ENCODE measurements at regions of chr17 and their contacts with region 1.

Region 1: GRCh38 chr17:40026816-40027613 is 11.8 kb downstream of the CSF3 start:
- DNase-seq: peak; percentile 74
- H3K4me3 ChIP-seq: no peak overlapping the region
- H3K27ac ChIP-seq: peak overlapping the region; percentile 99
- H3K4me1 ChIP-seq: peaks cover 48% of the 10 kb centered on the region
- H3K27me3 ChIP-seq: no peaks in the 10 kb centered on the region
- CTCF ChIP-seq: peak; percentile 81 to 93
- POLR2A ChIP-seq: no peak

Region 2: DNA sequence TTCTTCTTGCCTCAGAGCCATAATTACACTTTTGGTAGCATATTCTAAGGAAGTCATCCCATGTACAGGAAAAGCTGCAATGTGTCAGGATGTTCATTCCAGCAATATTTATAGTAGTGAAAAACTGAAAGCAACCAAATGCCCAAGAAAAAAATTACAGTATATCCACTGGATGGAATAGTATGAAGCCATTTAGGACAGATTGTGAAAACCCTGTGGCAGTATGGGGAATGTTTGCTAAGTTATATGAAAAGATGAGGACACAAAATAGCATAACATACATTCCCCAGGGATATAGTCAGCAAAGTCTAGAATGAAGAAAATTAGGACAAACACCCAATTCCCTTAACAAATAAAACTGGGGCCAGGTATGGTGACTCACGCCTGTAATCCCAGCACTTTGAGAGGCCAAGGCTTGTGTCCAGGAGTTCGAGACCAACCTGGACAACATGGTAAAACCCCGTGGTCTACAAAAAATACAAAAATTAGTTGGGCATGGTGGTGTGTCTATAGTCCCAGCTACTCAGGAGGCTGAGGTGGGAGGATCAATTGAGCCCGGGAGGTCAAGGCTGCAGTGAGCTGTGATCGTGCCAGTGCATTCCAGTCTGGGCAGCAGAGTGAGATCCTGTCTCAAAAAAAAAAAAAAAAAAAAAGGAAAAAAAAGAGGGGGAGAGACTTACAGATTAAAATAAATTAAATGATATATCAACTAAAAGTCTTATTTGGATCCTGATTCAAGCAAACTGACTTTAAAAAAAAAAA is 97.2 kb before region 1 on chr17:
- CTCF ChIA-PET with region 1: no interaction called
- POLR2A ChIA-PET with region 1: no interaction called
- dilution Hi-C with region 1: no loop called
- intact Hi-C with region 1: no loop called
- DNase-seq: no peak
- H3K4me3 ChIP-seq: peak overlapping the region in 1 of 3 experiments; percentile 34
- H3K27ac ChIP-seq: peak overlapping the region; percentile 100
- H3K4me1 ChIP-seq: peaks cover 36% of the 10 kb centered on the region
- H3K27me3 ChIP-seq: no peaks in the 10 kb centered on the region
- CTCF ChIP-seq: no peak
- POLR2A ChIP-seq: no peak

Region 3: DNA sequence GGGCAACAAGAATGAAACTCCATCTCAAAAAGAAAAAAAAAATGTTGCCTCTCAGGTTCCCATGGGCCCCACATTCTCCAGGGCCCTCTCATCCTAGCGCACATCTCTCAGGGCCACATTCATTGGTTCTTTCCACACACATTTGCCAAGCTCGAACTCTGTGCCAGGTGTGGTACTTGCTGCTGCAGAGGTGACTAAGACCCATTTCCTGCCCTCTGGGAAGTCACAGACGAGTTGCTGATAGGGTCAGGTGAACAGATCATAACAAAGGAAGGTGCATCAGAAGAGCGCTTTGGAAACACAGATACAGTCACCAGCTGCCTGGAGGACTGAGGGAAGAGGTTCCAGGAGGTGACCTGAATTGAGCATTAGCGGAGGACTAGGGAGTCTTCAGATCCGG is 63.2 kb before region 1 on chr17:
- CTCF ChIA-PET with region 1: interaction called, 15 read pairs
- POLR2A ChIA-PET with region 1: no interaction called
- dilution Hi-C with region 1: no loop called
- intact Hi-C with region 1: loop called (anchors 1 kb)
- DNase-seq: no peak
- H3K4me3 ChIP-seq: no peak overlapping the region
- H3K27ac ChIP-seq: no peak overlapping the region
- H3K4me1 ChIP-seq: no peaks in the 10 kb centered on the region
- H3K27me3 ChIP-seq: peaks cover 4% of the 10 kb centered on the region in 2 experiments
- CTCF ChIP-seq: no peak
- POLR2A ChIP-seq: no peak

Measured in endothelial cell of umbilical vein (primary cell).